ENCODE measurements at regions of chr15 and their contacts with region 1.

Region 1: DNA sequence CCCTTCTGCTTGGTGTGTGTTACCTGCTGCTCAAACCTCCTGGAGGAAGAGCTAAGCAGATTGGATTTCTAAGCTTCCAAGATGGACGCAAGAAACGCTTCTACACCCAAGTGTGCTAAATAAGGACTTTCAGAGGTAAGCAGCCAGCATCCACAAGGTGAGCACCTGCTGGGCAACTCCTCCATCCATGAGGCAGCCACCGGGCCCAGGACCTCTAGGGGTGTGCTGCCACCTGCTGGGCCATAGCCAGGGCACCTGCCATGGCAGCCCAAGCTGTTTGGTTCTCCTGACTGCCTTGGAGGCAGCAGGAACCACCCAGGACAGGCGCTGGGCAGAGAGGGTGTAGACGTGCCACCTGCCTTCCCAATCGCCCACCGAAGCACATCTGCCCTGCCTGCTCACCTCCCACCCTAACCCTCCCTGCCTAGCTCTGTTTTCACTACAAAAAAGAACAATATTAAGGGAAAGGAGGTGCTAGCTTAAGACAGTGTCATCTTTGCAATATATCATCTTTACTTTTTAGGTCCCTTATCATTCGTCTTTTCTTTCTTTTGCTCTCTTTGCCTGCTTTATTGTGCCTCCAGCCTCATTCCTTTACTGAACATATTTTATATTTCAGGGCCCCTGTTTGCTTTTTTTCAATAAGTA is 12.9 kb downstream of the C15orf62 start:
- DNase-seq: peak; percentile 63
- H3K4me3 ChIP-seq: no peak overlapping the region
- H3K27ac ChIP-seq: no peak overlapping the region
- H3K4me1 ChIP-seq: peaks cover 11% of the 10 kb centered on the region
- H3K27me3 ChIP-seq: no peaks in the 10 kb centered on the region
- CTCF ChIP-seq: peak; percentile 61 to 88
- POLR2A ChIP-seq: no peak

Region 2: GRCh38 chr15:40684381-40684780 is 98.3 kb before region 1 on chr15:
- CTCF ChIA-PET with region 1: interaction called, 5 read pairs
- POLR2A ChIA-PET with region 1: no interaction called
- dilution Hi-C with region 1: no loop called
- intact Hi-C with region 1: loop called (anchors 1 kb)
- DNase-seq: no peak
- H3K4me3 ChIP-seq: no peak overlapping the region
- H3K27ac ChIP-seq: no peak overlapping the region
- H3K4me1 ChIP-seq: no peaks in the 10 kb centered on the region
- H3K27me3 ChIP-seq: no peaks in the 10 kb centered on the region
- CTCF ChIP-seq: no peak
- POLR2A ChIP-seq: no peak

Region 3: DNA sequence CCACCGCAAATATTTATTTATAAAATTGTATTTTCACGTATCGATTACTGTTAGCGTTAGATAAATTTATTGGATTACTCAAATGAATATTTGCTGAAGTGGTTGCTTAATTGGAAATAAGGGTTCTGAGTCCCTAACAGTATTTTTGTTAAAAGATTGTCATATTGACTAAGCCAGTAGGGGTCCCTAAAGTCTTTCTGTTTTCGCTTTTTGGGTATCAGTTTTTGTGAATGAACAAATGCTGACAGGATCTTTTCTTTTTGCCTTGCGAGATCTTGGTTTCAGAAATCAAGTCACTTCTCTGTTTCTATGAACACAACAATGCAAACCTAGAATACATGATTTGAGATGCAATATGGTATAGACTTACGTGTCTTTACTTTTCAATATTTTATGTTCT is 80.6 kb before region 1 on chr15:
- CTCF ChIA-PET with region 1: interaction called, 10 read pairs
- POLR2A ChIA-PET with region 1: no interaction called
- dilution Hi-C with region 1: no loop called
- intact Hi-C with region 1: loop called (anchors 2 kb)
- DNase-seq: peak; percentile 43
- H3K4me3 ChIP-seq: no peak overlapping the region
- H3K27ac ChIP-seq: no peak overlapping the region
- H3K4me1 ChIP-seq: no peaks in the 10 kb centered on the region
- H3K27me3 ChIP-seq: no peaks in the 10 kb centered on the region
- CTCF ChIP-seq: peak; percentile 6 to 29
- POLR2A ChIP-seq: no peak

Region 4: DNA sequence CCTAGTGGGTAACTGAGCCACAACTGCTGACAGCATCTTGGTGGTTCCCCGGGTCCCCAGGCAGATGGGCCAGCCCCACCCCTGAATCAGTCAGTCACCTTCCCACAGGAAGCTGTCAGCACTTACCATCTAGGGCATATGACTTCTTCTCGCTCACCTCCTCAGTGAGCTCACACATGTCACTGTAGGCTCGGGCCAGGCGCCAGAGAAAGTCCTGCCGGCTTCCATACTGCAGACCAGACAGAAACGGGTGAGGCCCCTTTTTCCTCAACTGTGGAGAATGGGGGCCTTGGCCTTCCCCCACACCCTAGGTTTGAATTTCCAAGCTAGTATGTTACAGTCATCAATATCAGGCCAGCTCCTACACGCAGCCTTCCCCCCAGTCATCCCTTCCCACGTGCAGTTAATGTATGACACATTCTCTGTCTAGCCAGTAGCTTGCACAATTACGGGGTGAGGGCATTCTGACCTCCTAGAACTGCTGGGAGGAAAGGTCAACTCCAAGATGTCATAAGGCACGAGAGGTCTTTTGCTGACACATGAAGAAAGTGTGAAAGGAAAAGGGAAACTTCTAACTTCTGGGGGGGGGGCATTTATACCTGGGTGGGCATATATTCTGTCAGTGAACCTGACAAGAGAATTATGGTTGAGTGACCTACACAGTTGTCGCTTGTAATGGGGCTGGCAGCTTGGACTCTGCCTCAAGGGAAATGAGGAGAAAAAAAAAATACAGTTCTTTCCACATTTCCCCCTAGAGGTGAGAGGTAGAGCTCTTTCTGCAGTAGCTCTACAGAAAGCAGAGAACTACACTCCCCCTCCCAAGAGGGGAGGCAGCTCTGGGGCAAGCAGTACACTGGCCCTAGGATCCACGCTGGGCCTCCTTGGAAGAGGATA is 38.5 kb before region 1 on chr15:
- CTCF ChIA-PET with region 1: interaction called, 39 read pairs
- POLR2A ChIA-PET with region 1: no interaction called
- dilution Hi-C with region 1: no loop called
- intact Hi-C with region 1: loop called (anchors 1 kb)
- DNase-seq: no peak
- H3K4me3 ChIP-seq: no peak overlapping the region
- H3K27ac ChIP-seq: no peak overlapping the region
- H3K4me1 ChIP-seq: no peaks in the 10 kb centered on the region
- H3K27me3 ChIP-seq: no peaks in the 10 kb centered on the region
- CTCF ChIP-seq: no peak
- POLR2A ChIP-seq: no peak

Region 5: DNA sequence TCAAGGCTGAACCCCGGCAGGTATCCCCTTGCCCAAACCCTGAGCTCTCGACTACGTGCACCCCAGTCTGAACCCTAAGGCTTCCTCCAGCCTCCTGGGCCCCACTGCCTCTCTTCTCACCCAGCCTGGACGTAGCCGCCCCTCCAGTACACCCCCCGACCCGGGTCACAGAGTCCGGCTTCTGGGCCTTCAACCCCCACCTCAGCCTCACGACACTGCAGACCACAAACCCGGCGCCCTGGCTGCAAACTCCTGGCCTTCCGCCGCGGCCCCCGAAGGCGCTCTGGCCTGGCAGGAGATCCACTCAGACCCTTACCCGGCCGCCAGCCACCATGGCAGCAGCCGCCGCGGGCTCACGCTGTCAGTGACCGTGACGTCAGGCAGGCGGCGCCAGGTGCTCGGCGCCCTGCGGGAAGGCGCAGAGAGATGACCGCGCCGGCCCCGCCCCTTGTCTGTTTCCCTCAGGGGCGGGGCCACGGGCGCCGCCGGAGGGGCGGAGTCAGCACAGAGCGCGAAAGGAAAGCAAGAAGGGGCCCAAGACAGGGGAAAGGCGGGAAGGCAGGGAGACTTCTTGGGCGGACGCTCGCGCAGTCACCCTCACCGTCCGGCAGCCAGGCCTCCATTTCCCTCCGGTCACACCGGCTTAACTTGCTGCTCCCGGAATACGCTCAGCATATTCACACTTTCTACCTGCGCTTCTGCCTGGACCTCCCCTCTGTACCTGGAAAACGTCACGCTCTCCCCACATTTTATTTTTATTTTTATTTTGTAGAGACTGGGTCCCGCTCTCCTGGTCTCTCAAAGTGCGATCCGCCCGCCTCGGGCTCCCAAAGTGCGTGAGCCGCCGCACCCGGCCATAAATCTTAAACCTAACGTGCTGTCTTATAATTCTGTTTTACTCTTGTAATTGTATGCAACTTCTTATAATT is 27.6 kb before region 1 on chr15 and contains the start of gene RMDN3:
- CTCF ChIA-PET with region 1: interaction called, 6 read pairs
- POLR2A ChIA-PET with region 1: no interaction called
- dilution Hi-C with region 1: no loop called
- intact Hi-C with region 1: loop called (anchors 2 kb)
- DNase-seq: peak; percentile 94
- H3K4me3 ChIP-seq: peak within 1 kb of the TSS; percentile 70 to 82 (median 71)
- H3K27ac ChIP-seq: peak within 1 kb of the TSS; percentile 71
- H3K4me1 ChIP-seq: peaks cover 8% of the 10 kb centered on the region
- H3K27me3 ChIP-seq: no peaks in the 10 kb centered on the region
- CTCF ChIP-seq: no peak
- POLR2A ChIP-seq: peak; percentile 81
- total RNA-seq, gene RMDN3: 35.9 and 37.2 TPM in 2 replicates

Region 6: GRCh38 chr15:40763801-40764732 is 18.6 kb before region 1 on chr15 and contains the start of gene GCHFR:
- CTCF ChIA-PET with region 1: interaction called, 22 read pairs
- POLR2A ChIA-PET with region 1: no interaction called
- dilution Hi-C with region 1: no loop called
- intact Hi-C with region 1: loop called (anchors 2 kb)
- DNase-seq: peak; percentile 73
- H3K4me3 ChIP-seq: peak within 1 kb of the TSS in 2 of 3 experiments; percentile 25 to 32
- H3K27ac ChIP-seq: no peak within 1 kb of the TSS
- H3K4me1 ChIP-seq: peaks cover 31% of the 10 kb centered on the region
- H3K27me3 ChIP-seq: no peaks in the 10 kb centered on the region
- CTCF ChIP-seq: peak in 1 of 2 donors; percentile 59
- POLR2A ChIP-seq: no peak
- total RNA-seq, gene GCHFR: 5.5 and 6.3 TPM in 2 replicates

Region 7: GRCh38 chr15:40769274-40770146 is 13.2 kb before region 1 on chr15 and contains the start of gene C15orf62:
- CTCF ChIA-PET with region 1: interaction called, 22 read pairs
- POLR2A ChIA-PET with region 1: no interaction called
- dilution Hi-C with region 1: no loop called
- intact Hi-C with region 1: loop called (anchors 2 kb)
- DNase-seq: peak; percentile 65
- H3K4me3 ChIP-seq: no peak within 1 kb of the TSS
- H3K27ac ChIP-seq: peak within 1 kb of the TSS; percentile 46
- H3K4me1 ChIP-seq: peaks cover 29% of the 10 kb centered on the region
- H3K27me3 ChIP-seq: no peaks in the 10 kb centered on the region
- CTCF ChIP-seq: no peak
- POLR2A ChIP-seq: no peak
- total RNA-seq, gene C15orf62: 0.38 and 0.44 TPM in 2 replicates